RWPE1 (cell line): ENCODE measurements at regions of chr1 and their contacts with region 1.

Region 1: GRCh38 chr1:46102769-46103476 is 29.5 kb downstream of the PIK3R3 start:
- DNase-seq: peak; percentile 8
- H3K27ac ChIP-seq: peak overlapping the region; percentile 20; the same call in 1 of the 2 replicates
- CTCF ChIP-seq: no peak

Region 2: GRCh38 chr1:46117810-46118494 is 15.0 kb after region 1 on chr1:
- CTCF ChIA-PET with region 1: no interaction called
- POLR2A ChIA-PET with region 1: interaction called, 13 read pairs
- DNase-seq: no peak
- H3K27ac ChIP-seq: no peak overlapping the region
- CTCF ChIP-seq: no peak

Region 3: DNA sequence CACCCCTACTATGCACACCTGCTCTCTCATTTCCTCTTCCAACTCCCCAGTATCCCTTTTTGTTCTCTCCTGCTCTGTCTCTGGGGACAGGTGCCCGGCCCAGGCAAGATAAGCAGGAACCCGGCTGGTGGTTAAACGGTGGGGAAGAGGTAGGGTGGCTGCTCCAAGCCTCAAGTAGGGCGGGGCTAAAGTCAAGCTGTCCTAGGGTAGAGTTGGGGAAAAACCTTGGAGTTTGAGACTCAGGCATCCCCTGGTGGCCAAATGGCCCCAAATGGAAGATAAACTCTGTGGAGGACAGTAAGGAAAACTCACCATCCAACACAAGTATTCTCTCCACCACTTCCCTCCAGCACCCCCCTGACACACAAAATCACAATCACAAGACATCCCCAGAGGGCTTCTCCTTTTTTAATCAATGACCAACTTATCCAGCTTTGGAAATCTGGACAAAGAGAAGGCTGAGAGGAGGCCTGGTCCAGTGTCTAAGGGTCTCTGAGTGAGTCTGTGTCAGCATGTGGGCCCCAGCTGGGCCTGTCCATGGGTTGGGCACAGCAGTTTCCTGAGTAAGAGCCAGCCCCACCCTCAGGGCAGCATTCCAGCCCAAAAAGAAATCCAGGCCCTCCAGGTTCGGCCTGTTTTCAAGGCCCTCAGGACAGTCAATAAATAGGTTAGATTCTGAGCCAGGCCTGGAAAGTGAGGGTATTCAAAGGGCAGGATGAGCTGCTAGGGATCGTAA is 85.5 kb after region 1 on chr1:
- CTCF ChIA-PET with region 1: no interaction called
- POLR2A ChIA-PET with region 1: no interaction called
- DNase-seq: peak; percentile 52
- H3K27ac ChIP-seq: peak overlapping the region; percentile 98
- CTCF ChIP-seq: no peak